ENCODE measurements at regions of chr2 and their contacts with region 1.

Region 1: GRCh38 chr2:143110758-143111428 is 18.3 kb upstream of the ARHGAP15 start:
- DNase-seq: no peak
- ATAC-seq: peak; percentile 81
- H3K4me3 Mint-ChIP-seq: no peak overlapping the region
- H3K27ac Mint-ChIP-seq: peak overlapping the region; percentile 50
- H3K4me1 Mint-ChIP-seq: peaks cover 8% of the 10 kb centered on the region
- H3K27me3 Mint-ChIP-seq: no peaks in the 10 kb centered on the region
- CTCF ChIP-seq: peak; percentile 77

Region 2: DNA sequence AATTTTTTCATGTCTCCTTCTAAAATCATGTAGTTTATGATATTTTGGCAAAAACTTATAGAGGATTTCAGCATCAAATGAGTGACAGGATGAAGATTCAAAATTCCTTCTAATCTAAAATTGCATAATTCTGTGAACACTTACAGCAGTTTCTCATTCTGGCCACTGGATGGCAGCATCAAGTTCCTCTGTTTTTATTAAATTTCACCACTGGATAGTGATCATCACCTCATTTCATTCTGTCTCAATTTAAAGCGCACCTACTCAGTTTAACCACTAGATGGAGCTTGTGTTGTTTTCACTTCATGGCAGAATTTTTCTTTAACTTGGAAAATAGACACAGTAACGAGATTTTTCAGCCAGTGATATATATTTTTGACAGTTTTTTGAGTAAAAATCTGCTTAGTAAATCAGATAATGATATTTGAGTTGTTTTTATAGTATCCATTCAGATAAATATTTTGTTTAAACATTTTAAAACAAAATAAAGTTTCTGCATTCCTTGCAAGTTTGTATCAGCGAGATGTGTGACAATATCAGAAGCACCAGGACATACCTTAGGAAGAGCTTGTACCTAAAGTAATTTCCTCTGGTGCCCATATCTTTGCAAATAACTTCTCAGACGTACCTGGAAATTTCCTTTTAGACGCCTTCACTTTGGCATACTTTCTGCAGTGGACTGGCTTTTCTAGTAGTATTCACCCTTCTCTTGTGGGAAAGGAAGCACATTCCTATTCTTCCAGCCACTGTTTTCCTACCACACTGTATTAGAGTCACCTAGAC is 76.4 kb before region 1 on chr2:
- CTCF ChIA-PET with region 1: interaction called, 6 read pairs
- POLR2A ChIA-PET with region 1: no interaction called
- intact Hi-C with region 1: loop called (anchors 1 kb)
- DNase-seq: no peak
- ATAC-seq: peak; percentile 99
- H3K4me3 Mint-ChIP-seq: no peak overlapping the region
- H3K27ac Mint-ChIP-seq: no peak overlapping the region
- H3K4me1 Mint-ChIP-seq: peaks cover 9% of the 10 kb centered on the region
- H3K27me3 Mint-ChIP-seq: no peaks in the 10 kb centered on the region
- CTCF ChIP-seq: peak; percentile 79

Region 3: GRCh38 chr2:143128681-143129580 is 18.0 kb after region 1 on chr2 and contains the start of gene ARHGAP15:
- CTCF ChIA-PET with region 1: interaction called, 23 read pairs
- POLR2A ChIA-PET with region 1: interaction called, 9 read pairs
- intact Hi-C with region 1: loop called (anchors 1 kb)
- DNase-seq: peak; percentile 61
- ATAC-seq: peak; percentile 91
- H3K4me3 Mint-ChIP-seq: peak within 1 kb of the TSS; percentile 84
- H3K27ac Mint-ChIP-seq: peak within 1 kb of the TSS; percentile 100
- H3K4me1 Mint-ChIP-seq: peaks cover 49% of the 10 kb centered on the region
- H3K27me3 Mint-ChIP-seq: no peaks in the 10 kb centered on the region
- CTCF ChIP-seq: no peak
- total RNA-seq, gene ARHGAP15: 101 and 112 TPM in 2 replicates

Region 4: DNA sequence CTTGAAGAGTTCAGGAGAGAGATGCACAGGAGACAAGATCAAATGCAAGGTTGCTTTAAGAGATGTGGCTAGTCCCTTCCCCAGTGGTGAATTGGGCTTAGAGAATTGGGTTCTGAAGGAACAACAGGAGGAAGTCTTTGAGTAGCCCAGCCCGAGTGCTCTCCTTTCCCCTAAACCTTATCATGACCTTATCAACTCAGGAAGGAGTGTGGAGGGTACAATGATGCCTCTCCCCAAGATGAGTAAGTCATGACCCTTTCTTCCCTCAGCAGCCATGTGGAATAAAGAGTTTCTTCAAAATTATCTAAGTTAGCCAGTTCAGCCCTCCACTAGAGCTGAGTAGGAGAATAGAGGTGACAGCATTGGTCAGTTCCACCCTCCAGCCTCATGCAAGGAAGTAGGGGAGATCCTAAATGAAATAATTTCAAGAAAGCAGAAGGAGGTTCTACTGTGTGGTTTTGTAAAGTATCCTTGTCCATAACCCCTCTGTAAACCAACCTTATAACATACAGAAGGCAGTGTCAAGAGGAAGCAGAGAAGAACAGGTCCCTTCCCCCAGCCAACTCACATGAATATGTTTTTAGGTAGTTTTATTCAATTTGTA is 106.7 kb after region 1 on chr2:
- CTCF ChIA-PET with region 1: interaction called, 128 read pairs
- POLR2A ChIA-PET with region 1: interaction called, 4 read pairs
- intact Hi-C with region 1: loop called (anchors 1 kb)
- DNase-seq: no peak
- ATAC-seq: no peak
- H3K4me3 Mint-ChIP-seq: no peak overlapping the region
- H3K27ac Mint-ChIP-seq: peak overlapping the region; percentile 38
- H3K4me1 Mint-ChIP-seq: peaks cover 16% of the 10 kb centered on the region
- H3K27me3 Mint-ChIP-seq: no peaks in the 10 kb centered on the region
- CTCF ChIP-seq: no peak

Region 5: GRCh38 chr2:143284087-143284675 is 173.3 kb after region 1 on chr2:
- CTCF ChIA-PET with region 1: interaction called, 33 read pairs
- POLR2A ChIA-PET with region 1: no interaction called
- intact Hi-C with region 1: loop called (anchors 1 kb)
- DNase-seq: no peak
- ATAC-seq: peak; percentile 88
- H3K4me3 Mint-ChIP-seq: no peak overlapping the region
- H3K27ac Mint-ChIP-seq: no peak overlapping the region
- H3K4me1 Mint-ChIP-seq: peaks cover 11% of the 10 kb centered on the region
- H3K27me3 Mint-ChIP-seq: no peaks in the 10 kb centered on the region
- CTCF ChIP-seq: peak; percentile 72